ENCODE measurements at regions of chr5 and their contacts with region 1.

Region 1: DNA sequence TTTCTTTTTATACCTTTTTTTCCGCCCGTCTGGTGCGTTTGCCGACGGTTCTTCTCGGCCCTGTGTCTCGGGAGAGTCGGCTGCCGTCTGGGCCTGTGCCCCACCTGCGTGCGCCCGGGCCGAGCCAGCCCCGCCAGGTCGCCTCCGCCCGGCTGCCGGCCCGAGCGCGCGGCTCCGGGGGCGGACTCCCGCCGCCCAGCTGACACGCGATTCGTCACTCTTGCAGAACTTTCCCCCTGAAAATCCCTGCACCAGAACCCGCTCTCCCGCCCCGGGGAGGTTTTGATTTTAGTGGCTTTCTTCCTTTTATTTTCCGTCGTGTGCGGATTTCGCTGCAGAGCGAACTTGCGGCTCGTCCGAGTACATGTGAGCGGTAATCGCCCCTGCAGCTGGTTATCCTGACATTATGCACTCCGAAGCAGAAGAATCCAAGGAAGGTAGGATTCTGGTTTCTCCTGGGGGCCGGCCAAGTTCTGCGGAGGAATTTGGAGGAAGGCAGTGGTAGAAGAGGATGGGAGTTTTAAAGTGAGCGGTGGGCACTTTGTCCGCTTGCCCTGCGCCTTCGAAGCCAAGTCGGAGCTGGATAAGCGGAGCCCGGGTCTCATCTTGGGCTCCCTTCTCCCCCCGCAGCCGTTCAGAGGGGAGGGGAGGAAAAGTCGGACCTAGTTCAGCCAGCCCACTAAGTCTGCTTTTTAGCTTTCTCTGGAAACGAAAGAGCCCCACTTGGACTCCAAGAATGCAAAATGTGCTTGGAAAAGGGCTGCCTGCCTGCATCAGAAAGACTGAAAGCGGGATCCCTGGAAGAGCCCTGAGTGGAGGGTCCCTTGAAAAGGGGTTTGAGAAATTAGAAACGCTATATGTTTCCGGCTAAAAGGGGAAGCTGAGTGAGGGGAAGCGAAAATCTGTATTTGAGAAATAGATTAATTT is at the start of gene TNFAIP8:
- DNase-seq: no peak
- ATAC-seq: peak; percentile 66
- H3K4me3 ChIP-seq: peak within 1 kb of the TSS; percentile 96
- H3K27ac ChIP-seq: peak within 1 kb of the TSS; percentile 92
- H3K4me1 ChIP-seq: peaks cover 40% of the 10 kb centered on the region
- H3K27me3 ChIP-seq: no peaks in the 10 kb centered on the region
- CTCF ChIP-seq: no peak
- EP300 ChIP-seq: peak in 1 of 2 experiments; percentile 61; a peak in 2 of 4 replicates
- POLR2A ChIP-seq: peak; percentile 74
- RAD21 ChIP-seq: peak; percentile 26; the same call in 1 of the 2 replicates
- polyA plus RNA-seq, gene TNFAIP8: 217 to 324 TPM

Region 2: DNA sequence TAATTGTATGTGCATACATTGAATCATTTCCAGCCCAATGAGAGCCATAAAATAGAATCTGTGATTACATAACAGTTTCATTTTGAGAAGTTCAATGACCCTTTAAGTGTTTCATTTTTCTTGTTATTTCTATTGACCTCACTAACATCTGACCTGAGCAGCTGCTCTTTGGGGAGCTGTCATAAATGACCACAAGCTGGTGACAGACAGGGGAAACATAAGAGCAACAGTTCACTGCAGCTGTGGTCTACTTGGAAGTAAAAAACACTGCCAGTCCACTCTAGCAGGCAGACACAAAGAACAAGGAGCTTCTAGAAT is 633.0 kb before region 1 on chr5:
- CTCF ChIA-PET with region 1: no interaction called
- POLR2A ChIA-PET with region 1: no interaction called
- RAD21 ChIA-PET with region 1: no interaction called
- SMC1A ChIA-PET with region 1: no interaction called
- in situ Hi-C with region 1: no loop called
- intact Hi-C with region 1: loop called (anchors 10 kb)
- DNase-seq: peak; percentile 69
- ATAC-seq: peak; percentile 91
- H3K4me3 ChIP-seq: no peak overlapping the region
- H3K27ac ChIP-seq: no peak overlapping the region; the same call in none of the 2 replicates
- H3K4me1 ChIP-seq: peaks cover 12% of the 10 kb centered on the region
- H3K27me3 ChIP-seq: no peaks in the 10 kb centered on the region
- CTCF ChIP-seq: no peak
- EP300 ChIP-seq: peak; percentile 88 to 91
- POLR2A ChIP-seq: no peak
- RAD21 ChIP-seq: 0 out of 2 replicates have a peak, but pooled peaks have one; percentile 3

Region 3: GRCh38 chr5:119274767-119275130 is 81.2 kb before region 1 on chr5:
- CTCF ChIA-PET with region 1: interaction called, 3 read pairs
- POLR2A ChIA-PET with region 1: interaction called, 10 read pairs
- RAD21 ChIA-PET with region 1: interaction called, 8 read pairs
- SMC1A ChIA-PET with region 1: interaction called, 8 read pairs
- in situ Hi-C with region 1: no loop called
- intact Hi-C with region 1: no loop called
- DNase-seq: no peak
- ATAC-seq: peak; percentile 23
- H3K4me3 ChIP-seq: peak overlapping the region; percentile 65; the same call in 1 of the 2 replicates
- H3K27ac ChIP-seq: peak overlapping the region; percentile 77
- H3K4me1 ChIP-seq: peaks cover 66% of the 10 kb centered on the region
- H3K27me3 ChIP-seq: no peaks in the 10 kb centered on the region
- CTCF ChIP-seq: no peak
- EP300 ChIP-seq: no peak
- POLR2A ChIP-seq: no peak
- RAD21 ChIP-seq: no peak

Region 4: DNA sequence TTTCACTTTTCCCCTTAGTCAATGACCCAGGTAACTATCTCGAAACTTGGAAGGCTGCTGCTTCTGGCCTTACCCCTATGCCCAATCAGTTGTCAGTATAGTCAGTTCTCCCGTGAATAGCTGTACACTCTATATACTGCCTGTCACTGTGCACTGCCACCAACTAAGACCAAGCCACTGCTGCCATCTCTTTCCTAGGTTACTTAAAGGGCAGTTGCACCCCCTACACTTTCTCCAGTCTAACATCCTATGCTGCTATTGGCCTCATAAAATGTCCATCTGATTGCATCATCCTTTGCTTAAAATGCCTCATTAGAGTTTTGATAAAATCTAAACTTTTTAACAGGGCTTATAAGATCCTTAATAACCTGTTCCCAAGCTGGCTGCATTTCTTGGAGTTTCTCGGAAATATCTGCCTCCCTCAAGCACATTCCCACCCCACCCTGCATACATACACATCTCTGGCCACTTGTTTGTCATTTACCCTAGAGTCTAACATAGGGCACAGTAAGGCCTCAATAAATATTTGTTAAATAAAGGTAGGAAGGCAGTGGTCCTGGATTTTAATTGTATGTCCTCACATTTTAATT is 32.9 kb before region 1 on chr5:
- CTCF ChIA-PET with region 1: interaction called, 3 read pairs
- POLR2A ChIA-PET with region 1: interaction called, 9 read pairs
- RAD21 ChIA-PET with region 1: interaction called, 12 read pairs
- SMC1A ChIA-PET with region 1: interaction called, 6 read pairs
- in situ Hi-C with region 1: no loop called
- intact Hi-C with region 1: no loop called
- DNase-seq: no peak
- ATAC-seq: peak; percentile 64
- H3K4me3 ChIP-seq: peak overlapping the region; percentile 26; the same call in 1 of the 2 replicates
- H3K27ac ChIP-seq: peak overlapping the region; percentile 87
- H3K4me1 ChIP-seq: peaks cover 52% of the 10 kb centered on the region
- H3K27me3 ChIP-seq: no peaks in the 10 kb centered on the region
- CTCF ChIP-seq: no peak
- EP300 ChIP-seq: no peak
- POLR2A ChIP-seq: no peak
- RAD21 ChIP-seq: no peak

Region 5: DNA sequence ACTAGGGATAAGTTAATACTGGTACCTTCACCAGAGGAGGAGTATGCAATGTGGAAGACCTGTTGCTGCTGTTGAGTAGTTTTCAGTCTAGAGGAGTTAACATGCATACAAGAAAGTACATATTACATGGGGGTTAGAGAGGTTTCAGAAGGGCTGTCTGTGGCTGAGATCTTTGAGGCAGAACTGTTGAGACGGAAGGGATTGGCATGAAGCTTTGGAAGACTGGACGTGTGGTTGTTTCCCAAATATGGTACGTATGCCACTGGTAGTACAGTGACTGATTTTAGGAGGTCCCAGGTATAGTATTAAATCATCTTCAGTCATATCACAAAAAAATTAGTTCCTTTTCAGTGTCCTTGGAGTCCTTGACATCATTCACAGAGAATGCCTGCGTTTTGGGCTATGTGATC is 17.5 kb after region 1 on chr5:
- CTCF ChIA-PET with region 1: interaction called, 7 read pairs
- POLR2A ChIA-PET with region 1: interaction called, 125 read pairs
- RAD21 ChIA-PET with region 1: interaction called, 77 read pairs
- SMC1A ChIA-PET with region 1: interaction called, 1,117 read pairs
- in situ Hi-C with region 1: no loop called
- intact Hi-C with region 1: no loop called
- DNase-seq: peak; percentile 65
- ATAC-seq: peak; percentile 80
- H3K4me3 ChIP-seq: no peak overlapping the region
- H3K27ac ChIP-seq: peak overlapping the region; percentile 40; the same call in 1 of the 2 replicates
- H3K4me1 ChIP-seq: peaks cover 16% of the 10 kb centered on the region
- H3K27me3 ChIP-seq: no peaks in the 10 kb centered on the region
- CTCF ChIP-seq: no peak
- EP300 ChIP-seq: no peak
- POLR2A ChIP-seq: no peak
- RAD21 ChIP-seq: no peak

Region 6: GRCh38 chr5:119397518-119398380 is 41.8 kb after region 1 on chr5:
- CTCF ChIA-PET with region 1: interaction called, 3 read pairs
- POLR2A ChIA-PET with region 1: interaction called, 10 read pairs
- RAD21 ChIA-PET with region 1: interaction called, 11 read pairs
- SMC1A ChIA-PET with region 1: interaction called, 10 read pairs
- in situ Hi-C with region 1: no loop called
- intact Hi-C with region 1: loop called (anchors 5 kb)
- DNase-seq: peak; percentile 81
- ATAC-seq: peak; percentile 73
- H3K4me3 ChIP-seq: 0 out of 2 replicates have a peak overlapping the region, but pooled peaks have one; percentile 1
- H3K27ac ChIP-seq: peak overlapping the region; percentile 83
- H3K4me1 ChIP-seq: peaks cover 65% of the 10 kb centered on the region
- H3K27me3 ChIP-seq: no peaks in the 10 kb centered on the region
- CTCF ChIP-seq: no peak
- EP300 ChIP-seq: peak; percentile 93 to 94
- POLR2A ChIP-seq: no peak
- RAD21 ChIP-seq: no peak

Measured in GM12878 (cell line).